Pancreas (tissue), 10 donors: ENCODE measurements at regions of chr1 and their contacts with region 1.

Region 1: GRCh38 chr1:64010316-64010715 is 193.1 kb upstream of the UBE2U start:
- DNase-seq: no peak
- ATAC-seq: no peak
- H3K4me3 ChIP-seq: no peak overlapping the region
- H3K27ac ChIP-seq: no peak overlapping the region
- H3K4me1 ChIP-seq: peaks cover 17 to 29% (median 24%) of the 10 kb centered on the region in 3 donors
- H3K27me3 ChIP-seq: no peaks in the 10 kb centered on the region
- CTCF ChIP-seq: no peak

Region 2: GRCh38 chr1:62765981-62766380 is 1244.3 kb before region 1 on chr1:
- intact Hi-C with region 1: no loop called
- DNase-seq: no peak
- ATAC-seq: no peak
- H3K4me3 ChIP-seq: no peak overlapping the region
- H3K27ac ChIP-seq: no peak overlapping the region
- H3K4me1 ChIP-seq: no peaks in the 10 kb centered on the region
- H3K27me3 ChIP-seq: no peaks in the 10 kb centered on the region
- CTCF ChIP-seq: no peak

Region 3: GRCh38 chr1:63917571-63918417 is 92.5 kb before region 1 on chr1:
- intact Hi-C with region 1: no loop called
- DNase-seq: no peak
- ATAC-seq: no peak
- H3K4me3 ChIP-seq: no peak overlapping the region
- H3K27ac ChIP-seq: peak overlapping the region; percentile 33 to 70 (median 61)
- H3K4me1 ChIP-seq: peaks cover 58 to 81% (median 63%) of the 10 kb centered on the region in 3 donors
- H3K27me3 ChIP-seq: no peaks in the 10 kb centered on the region
- CTCF ChIP-seq: no peak

Region 4: DNA sequence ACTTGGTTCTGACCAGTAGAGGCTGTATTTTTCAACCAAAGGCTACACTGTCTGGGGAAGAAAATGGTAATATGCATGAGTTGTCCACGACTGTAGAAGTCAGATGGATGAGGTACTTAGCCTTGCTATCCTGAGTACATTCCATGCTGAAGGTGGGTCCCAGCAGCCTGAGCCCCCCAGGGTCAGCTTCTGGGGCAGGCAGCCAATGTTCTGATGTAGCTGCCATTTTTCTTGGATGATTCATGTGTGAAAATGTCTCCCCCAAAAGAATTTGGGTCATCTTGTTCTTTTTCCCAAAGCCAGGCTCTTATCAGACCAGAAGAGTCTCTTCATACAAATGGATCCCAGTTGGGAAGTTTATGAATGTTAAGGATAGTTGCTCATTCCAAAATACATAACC is 20.9 kb after region 1 on chr1:
- intact Hi-C with region 1: loop called in 1 of 3 experiments (anchors 2 kb)
- DNase-seq: no peak
- ATAC-seq: no peak
- H3K4me3 ChIP-seq: no peak overlapping the region
- H3K27ac ChIP-seq: no peak overlapping the region
- H3K4me1 ChIP-seq: no peaks in the 10 kb centered on the region
- H3K27me3 ChIP-seq: no peaks in the 10 kb centered on the region
- CTCF ChIP-seq: no peak